Activated naive CD4-positive, alpha-beta T cell treated with anti-CD3 and anti-CD28 coated beads for 36 hours (primary cell): ENCODE measurements at regions of chr11 and their contacts with region 1.

Region 1: GRCh38 chr11:88535916-88536547 is 198.5 kb upstream of the CTSC start:
- DNase-seq: no peak
- H3K4me3 Mint-ChIP-seq: no peak overlapping the region
- H3K27ac Mint-ChIP-seq: peak overlapping the region; percentile 21
- H3K4me1 Mint-ChIP-seq: peaks cover 15% of the 10 kb centered on the region
- H3K27me3 Mint-ChIP-seq: peaks cover 9% of the 10 kb centered on the region

Region 2: DNA sequence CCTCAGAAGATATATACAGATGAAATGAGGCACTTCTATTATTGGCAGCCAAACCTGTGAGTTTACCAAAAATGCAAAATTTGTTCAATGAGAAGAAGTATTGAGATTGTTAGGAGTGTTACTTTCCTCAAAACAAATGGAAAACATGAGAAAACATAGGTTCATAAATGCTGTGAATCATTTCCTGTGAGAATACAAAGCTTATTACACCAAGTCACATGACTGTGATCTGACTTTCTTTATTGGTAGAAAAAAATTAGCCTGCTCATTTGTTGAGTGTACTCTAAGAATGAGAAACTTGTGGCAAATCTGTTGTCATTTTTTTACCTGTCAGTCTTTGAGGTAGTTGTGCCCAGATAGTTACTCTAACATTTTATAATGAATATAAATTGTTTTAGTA is 1283.2 kb before region 1 on chr11:
- CTCF ChIA-PET with region 1: no interaction called
- intact Hi-C with region 1: loop called (anchors 2 kb)
- DNase-seq: no peak
- H3K4me3 Mint-ChIP-seq: no peak overlapping the region
- H3K27ac Mint-ChIP-seq: peak overlapping the region; percentile 14
- H3K4me1 Mint-ChIP-seq: peaks cover 29% of the 10 kb centered on the region
- H3K27me3 Mint-ChIP-seq: no peaks in the 10 kb centered on the region

Region 3: GRCh38 chr11:88337181-88337986 is 198.6 kb before region 1 on chr11 and contains the start of gene CTSC:
- CTCF ChIA-PET with region 1: no interaction called
- intact Hi-C with region 1: loop called (anchors 1 kb)
- DNase-seq: peak; percentile 92
- H3K4me3 Mint-ChIP-seq: peak within 1 kb of the TSS; percentile 99
- H3K27ac Mint-ChIP-seq: peak within 1 kb of the TSS; percentile 73
- H3K4me1 Mint-ChIP-seq: peaks cover 48% of the 10 kb centered on the region
- H3K27me3 Mint-ChIP-seq: no peaks in the 10 kb centered on the region
- total RNA-seq, gene CTSC: 19.1 to 22.2 TPM

Region 4: DNA sequence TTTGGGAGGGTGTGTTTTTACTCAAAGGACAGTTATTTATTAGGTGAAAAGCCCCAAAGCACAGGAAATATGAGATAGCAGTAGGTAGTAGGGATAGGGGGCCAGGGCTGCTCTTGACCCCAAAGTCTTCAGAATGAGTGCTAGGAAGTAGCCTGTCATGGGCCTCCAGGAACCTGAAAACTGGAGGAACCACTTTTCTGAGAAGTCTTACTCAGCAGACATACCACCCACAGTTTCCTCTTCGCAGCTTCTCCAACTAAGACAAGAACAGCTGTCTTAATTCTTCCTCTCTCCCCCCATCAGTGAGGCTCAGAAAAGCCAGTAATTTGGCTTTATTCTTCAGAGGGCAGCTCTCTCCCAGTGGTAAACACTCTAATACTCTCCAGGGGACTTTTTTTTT is 114.5 kb before region 1 on chr11:
- CTCF ChIA-PET with region 1: no interaction called
- intact Hi-C with region 1: loop called (anchors 2 kb)
- DNase-seq: peak; percentile 63
- H3K4me3 Mint-ChIP-seq: no peak overlapping the region
- H3K27ac Mint-ChIP-seq: no peak overlapping the region
- H3K4me1 Mint-ChIP-seq: peaks cover 39% of the 10 kb centered on the region
- H3K27me3 Mint-ChIP-seq: no peaks in the 10 kb centered on the region

Region 5: GRCh38 chr11:88552377-88553062 is 16.5 kb after region 1 on chr11:
- CTCF ChIA-PET with region 1: interaction called, 19 read pairs
- intact Hi-C with region 1: no loop called
- DNase-seq: peak; percentile 76
- H3K4me3 Mint-ChIP-seq: no peak overlapping the region
- H3K27ac Mint-ChIP-seq: no peak overlapping the region
- H3K4me1 Mint-ChIP-seq: peaks cover 3% of the 10 kb centered on the region
- H3K27me3 Mint-ChIP-seq: no peaks in the 10 kb centered on the region

Region 6: DNA sequence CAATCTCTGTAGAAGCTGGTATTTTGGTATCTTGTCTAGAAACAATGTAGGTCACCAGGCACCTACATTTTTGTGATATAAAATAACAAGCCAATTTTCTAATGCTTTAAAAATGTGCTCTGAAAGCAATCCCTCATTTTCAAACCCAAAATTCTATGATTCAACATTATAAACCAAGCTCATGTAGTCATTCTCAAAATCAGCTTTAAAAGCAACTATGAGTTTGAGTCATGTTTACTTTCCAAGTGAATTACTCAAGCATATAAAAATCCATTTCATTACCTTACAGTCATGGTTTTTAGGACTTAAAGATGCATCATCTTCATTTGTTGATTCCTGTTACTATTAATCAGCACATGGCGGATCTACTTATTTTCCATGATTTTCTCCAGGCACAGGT is 313.3 kb after region 1 on chr11:
- CTCF ChIA-PET with region 1: no interaction called
- intact Hi-C with region 1: loop called (anchors 5 kb)
- DNase-seq: no peak
- H3K4me3 Mint-ChIP-seq: no peak overlapping the region
- H3K27ac Mint-ChIP-seq: no peak overlapping the region
- H3K4me1 Mint-ChIP-seq: peaks cover 17% of the 10 kb centered on the region
- H3K27me3 Mint-ChIP-seq: no peaks in the 10 kb centered on the region